HepG2 (cell line): ENCODE measurements at regions of chr10 and their contacts with region 1.

Region 1: DNA sequence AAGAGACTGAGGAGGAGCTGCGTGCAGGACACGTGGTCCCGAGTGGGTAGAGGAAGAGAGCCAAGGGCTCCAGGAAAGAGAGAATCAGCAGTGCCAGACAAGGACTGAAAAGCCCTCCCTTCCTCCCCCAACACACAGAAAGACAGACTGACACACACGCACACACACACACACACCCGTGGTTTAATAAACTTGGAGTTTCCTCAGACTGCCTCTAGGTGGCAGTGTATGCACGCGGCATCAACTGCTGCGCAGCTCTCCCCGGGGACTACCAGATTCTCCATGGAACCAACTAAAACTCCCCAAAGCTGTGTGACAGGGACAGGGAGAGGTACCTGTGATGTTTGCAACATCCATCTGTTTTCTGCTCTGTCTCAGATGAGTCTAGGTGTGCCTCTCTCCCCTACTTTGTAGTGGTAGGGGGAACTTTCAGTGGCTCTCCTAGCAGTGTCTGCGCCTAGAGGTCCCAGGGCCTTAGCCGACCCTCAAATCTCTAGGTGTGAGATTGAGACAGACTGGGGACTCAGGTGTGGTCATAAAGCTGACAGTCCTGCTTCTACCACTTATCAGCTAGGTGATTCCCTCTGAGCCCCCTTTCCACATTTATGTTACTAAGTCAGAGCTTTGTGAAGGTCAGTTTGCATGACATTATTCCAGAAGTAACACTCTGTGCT is 9.3 kb upstream of the TSPAN14 start:
- DNase-seq: peak; percentile 58
- ATAC-seq: peak; percentile 91
- H3K4me3 ChIP-seq: no peak overlapping the region
- H3K27ac ChIP-seq: no peak overlapping the region
- H3K4me1 ChIP-seq: peaks cover 53% of the 10 kb centered on the region
- H3K27me3 ChIP-seq: no peaks in the 10 kb centered on the region
- CTCF ChIP-seq: peak; percentile 78
- EP300 ChIP-seq: no peak
- POLR2A ChIP-seq: no peak
- RAD21 ChIP-seq: peak; percentile 51; the same call in 1 of the 2 replicates

Region 2: DNA sequence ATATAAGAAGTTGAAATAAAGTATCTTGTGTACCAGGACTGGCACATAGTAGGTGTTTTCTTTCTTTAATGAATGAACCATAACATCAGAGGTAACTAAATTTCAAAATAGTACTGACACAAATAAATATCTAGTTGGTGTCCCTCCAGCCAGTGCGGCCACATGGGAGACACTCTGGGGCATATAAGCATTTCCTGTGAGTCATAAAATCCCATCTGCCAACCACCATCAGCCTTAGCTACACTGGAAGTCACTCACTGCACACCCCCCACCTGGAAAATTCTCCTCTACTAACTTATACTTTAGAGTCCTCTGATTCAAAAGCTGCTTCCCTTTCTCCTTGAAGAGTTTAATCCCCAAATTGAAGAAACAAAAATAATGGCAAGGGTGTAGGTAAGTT is 120.7 kb before region 1 on chr10:
- CTCF ChIA-PET with region 1: no interaction called
- POLR2A ChIA-PET with region 1: no interaction called
- in situ Hi-C with region 1: no loop called
- intact Hi-C with region 1: no loop called
- DNase-seq: no peak
- ATAC-seq: no peak
- H3K4me3 ChIP-seq: no peak overlapping the region
- H3K27ac ChIP-seq: no peak overlapping the region
- H3K4me1 ChIP-seq: peaks cover 51% of the 10 kb centered on the region
- H3K27me3 ChIP-seq: no peaks in the 10 kb centered on the region; a peak in 1 of 5 replicates
- CTCF ChIP-seq: no peak
- EP300 ChIP-seq: no peak
- POLR2A ChIP-seq: no peak
- RAD21 ChIP-seq: no peak

Region 3: GRCh38 chr10:80382989-80383388 is 61.8 kb before region 1 on chr10:
- CTCF ChIA-PET with region 1: interaction called, 46 read pairs
- POLR2A ChIA-PET with region 1: no interaction called
- in situ Hi-C with region 1: loop called (anchors 5 kb)
- intact Hi-C with region 1: loop called (anchors 1 kb)
- DNase-seq: peak; percentile 40
- ATAC-seq: peak; percentile 52; the same call in 2 of the 3 replicates
- H3K4me3 ChIP-seq: no peak overlapping the region
- H3K27ac ChIP-seq: no peak overlapping the region
- H3K4me1 ChIP-seq: peaks cover 10% of the 10 kb centered on the region
- H3K27me3 ChIP-seq: no peaks in the 10 kb centered on the region
- CTCF ChIP-seq: peak; percentile 77
- EP300 ChIP-seq: no peak
- POLR2A ChIP-seq: no peak
- RAD21 ChIP-seq: peak; percentile 78

Region 4: DNA sequence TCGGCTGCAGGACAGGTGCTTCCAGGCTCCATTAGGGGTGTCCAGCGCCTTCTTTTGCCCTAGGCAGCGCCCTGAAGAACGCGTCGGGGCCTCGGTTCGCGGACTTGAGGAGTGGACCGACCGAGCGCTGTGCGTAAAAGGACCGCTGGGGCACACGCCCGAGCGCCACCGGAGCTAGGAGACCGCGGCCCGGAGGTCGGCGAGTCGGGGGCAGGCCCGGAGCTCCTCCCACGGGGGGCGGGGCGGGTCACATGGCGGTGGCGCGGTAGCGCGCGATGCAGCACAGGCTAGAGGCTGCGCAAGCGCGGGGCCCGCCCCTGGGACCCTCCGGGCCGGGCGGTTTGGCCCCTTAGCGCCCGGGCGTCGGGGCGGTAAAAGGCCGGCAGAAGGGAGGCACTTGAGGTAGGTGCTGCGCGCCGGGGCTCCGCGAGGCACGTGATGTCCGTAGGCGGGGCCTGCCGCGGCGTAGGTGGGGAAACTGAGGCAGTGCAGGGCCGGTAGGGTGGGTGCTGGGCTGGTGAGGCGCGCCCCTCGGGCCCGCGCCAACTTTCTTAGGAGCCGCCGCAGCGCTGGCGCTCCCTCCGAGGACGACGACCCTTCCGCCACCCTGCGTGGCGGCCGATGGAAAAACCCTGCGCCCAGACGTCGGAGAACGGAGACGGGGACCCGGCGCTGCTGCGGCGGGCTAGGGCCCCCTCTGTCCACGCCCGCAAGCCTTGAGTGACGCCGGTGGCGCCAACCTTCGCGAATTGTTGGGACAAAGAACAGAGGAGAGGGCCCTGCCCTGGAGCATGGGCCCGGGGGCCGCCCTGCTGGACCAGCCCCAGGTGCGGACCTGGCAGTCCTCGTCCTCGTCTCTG is 36.3 kb before region 1 on chr10 and contains the start of gene PRXL2A:
- CTCF ChIA-PET with region 1: no interaction called
- POLR2A ChIA-PET with region 1: interaction called, 6 read pairs
- in situ Hi-C with region 1: no loop called
- intact Hi-C with region 1: loop called (anchors 5 kb)
- DNase-seq: peak; percentile 74
- ATAC-seq: peak; percentile 88
- H3K4me3 ChIP-seq: peak within 1 kb of the TSS; percentile 76 to 86 (median 78)
- H3K27ac ChIP-seq: peak within 1 kb of the TSS; percentile 99
- H3K4me1 ChIP-seq: peaks cover 67% of the 10 kb centered on the region
- H3K27me3 ChIP-seq: no peaks in the 10 kb centered on the region; a peak in 1 of 5 replicates
- CTCF ChIP-seq: peak; percentile 15; the same call in 1 of the 2 replicates
- EP300 ChIP-seq: peak in 1 of 2 experiments; percentile 52; a peak in 1 of 4 replicates
- POLR2A ChIP-seq: peak; percentile 81 to 98
- RAD21 ChIP-seq: peak; percentile 20
- total RNA-seq, gene PRXL2A: 57.4 and 79.9 TPM in 2 replicates

Region 5: GRCh38 chr10:80530251-80530650 is 85.5 kb after region 1 on chr10:
- CTCF ChIA-PET with region 1: interaction called, 9 read pairs
- POLR2A ChIA-PET with region 1: no interaction called
- in situ Hi-C with region 1: no loop called
- intact Hi-C with region 1: loop called (anchors 1 kb)
- DNase-seq: peak; percentile 40
- ATAC-seq: peak; percentile 70
- H3K4me3 ChIP-seq: no peak overlapping the region
- H3K27ac ChIP-seq: no peak overlapping the region
- H3K4me1 ChIP-seq: 0 out of 2 replicates have a peak, but pooled peaks cover 5% of the 10 kb centered on the region
- H3K27me3 ChIP-seq: peaks cover 0 to 2% of the 10 kb centered on the region in 2 experiments; a peak in 3 of 5 replicates
- CTCF ChIP-seq: peak; percentile 59
- EP300 ChIP-seq: no peak
- POLR2A ChIP-seq: no peak
- RAD21 ChIP-seq: peak; percentile 45; the same call in 1 of the 2 replicates

Region 6: GRCh38 chr10:80662577-80663261 is 217.9 kb after region 1 on chr10:
- CTCF ChIA-PET with region 1: no interaction called
- POLR2A ChIA-PET with region 1: no interaction called
- in situ Hi-C with region 1: no loop called
- intact Hi-C with region 1: loop called (anchors 1 kb)
- DNase-seq: peak; percentile 43
- ATAC-seq: peak; percentile 86
- H3K4me3 ChIP-seq: peak overlapping the region; percentile 19 to 69 (median 39); a peak in 4 of 6 replicates
- H3K27ac ChIP-seq: no peak overlapping the region
- H3K4me1 ChIP-seq: peaks cover 19% of the 10 kb centered on the region
- H3K27me3 ChIP-seq: peaks cover 0 to 2% of the 10 kb centered on the region in 2 experiments; a peak in 2 of 5 replicates
- CTCF ChIP-seq: peak; percentile 84
- EP300 ChIP-seq: no peak
- POLR2A ChIP-seq: no peak
- RAD21 ChIP-seq: 0 out of 2 replicates have a peak, but pooled peaks have one; percentile 26